Right lobe of liver (tissue), 6 donors: ENCODE measurements at regions of chr2 and their contacts with region 1.

Region 1: GRCh38 chr2:33412920-33413319 is 63.5 kb upstream of the RASGRP3 start:
- DNase-seq: no peak
- ATAC-seq: peak; percentile 64 to 86 (median 80)
- H3K4me3 ChIP-seq: no peak overlapping the region
- H3K27ac ChIP-seq: no peak overlapping the region
- H3K4me1 ChIP-seq: no peaks in the 10 kb centered on the region
- H3K27me3 ChIP-seq: no peaks in the 10 kb centered on the region
- CTCF ChIP-seq: peak; percentile 52 to 64 (median 57)
- POLR2A ChIP-seq: no peak

Region 2: DNA sequence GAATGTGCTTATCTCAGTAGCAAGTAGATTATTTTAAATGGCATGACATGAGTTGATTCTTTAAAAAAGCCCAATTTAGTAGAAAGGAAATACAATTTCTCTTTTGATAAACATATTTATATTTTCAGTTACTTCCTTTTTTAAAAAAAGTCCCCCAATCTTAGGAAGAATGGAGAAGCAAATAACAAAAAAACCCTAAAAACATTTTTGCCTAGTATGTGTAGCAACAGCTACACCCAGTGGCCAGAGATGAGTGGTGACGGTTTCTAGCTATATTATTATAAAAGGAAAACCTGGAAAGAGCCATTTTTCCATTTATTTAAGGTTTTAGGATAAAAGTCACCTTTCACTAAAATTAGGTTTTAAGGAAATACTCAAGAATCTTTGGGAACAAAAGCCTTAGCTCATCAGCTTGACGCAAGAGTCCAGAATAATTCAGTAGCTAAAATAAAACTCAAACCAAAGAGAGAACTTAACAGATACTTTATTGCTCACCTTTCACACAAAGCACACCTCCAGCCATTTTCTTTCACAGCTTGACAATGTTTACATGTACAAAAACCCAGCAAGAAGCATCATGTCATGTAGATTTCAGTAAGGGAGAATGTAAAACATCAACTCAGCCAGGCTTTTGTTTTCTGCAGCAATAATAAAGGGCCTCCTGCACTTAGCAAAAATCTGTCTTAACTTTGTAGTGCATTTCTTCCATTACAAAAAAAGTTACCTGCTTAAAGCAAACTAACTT is 170.4 kb after region 1 on chr2:
- intact Hi-C with region 1: loop called (anchors 10 kb)
- DNase-seq: no peak
- ATAC-seq: peak; percentile 69 to 86 (median 80)
- H3K4me3 ChIP-seq: no peak overlapping the region
- H3K27ac ChIP-seq: no peak overlapping the region
- H3K4me1 ChIP-seq: no peaks in the 10 kb centered on the region
- H3K27me3 ChIP-seq: no peaks in the 10 kb centered on the region
- CTCF ChIP-seq: peak; percentile 73 to 86 (median 80)
- POLR2A ChIP-seq: no peak